A549 (cell line): ENCODE measurements at regions of chr10 and their contacts with region 1.

Region 1: GRCh38 chr10:43390759-43391158 is 18.2 kb downstream of the HNRNPF start:
- DNase-seq: peak in 1 of 2 experiments; percentile 73
- ATAC-seq: peak; percentile 82 to 87
- H3K4me3 ChIP-seq: no peak overlapping the region
- H3K27ac ChIP-seq: no peak overlapping the region
- H3K4me1 ChIP-seq: peaks cover 38% of the 10 kb centered on the region
- CTCF ChIP-seq: peak; percentile 46
- EP300 ChIP-seq: no peak
- POLR2A ChIP-seq: no peak
- RAD21 ChIP-seq: peak; percentile 56 to 64

Region 2: DNA sequence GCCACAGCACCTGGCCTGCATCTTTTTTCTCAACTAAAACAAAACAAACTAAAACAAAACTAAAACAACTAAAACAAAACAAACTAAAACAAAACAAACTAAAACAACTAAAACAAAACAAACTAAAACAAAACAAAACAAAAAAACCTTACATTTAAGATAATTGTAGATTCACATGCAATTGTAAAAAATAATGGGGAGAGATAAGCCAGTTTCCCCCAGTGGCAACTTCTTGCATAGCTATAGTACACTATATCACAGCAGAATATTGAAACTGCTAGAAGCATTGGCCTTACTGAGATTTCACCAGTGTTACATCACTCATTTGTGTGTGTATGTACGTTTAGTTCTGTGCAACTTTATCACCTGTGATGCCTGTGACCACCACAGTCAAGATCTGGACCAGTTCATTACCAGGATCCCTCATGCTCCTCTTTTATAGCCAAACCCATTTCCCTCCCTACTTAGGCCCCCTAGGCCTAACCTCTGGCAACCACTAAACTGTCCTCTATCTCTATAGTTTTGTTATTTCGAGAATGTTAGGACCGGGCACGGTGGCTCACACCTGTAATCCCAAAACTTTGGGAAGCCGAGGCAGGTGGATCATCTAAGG is 10.0 kb before region 1 on chr10:
- CTCF ChIA-PET with region 1: interaction called, 10 read pairs
- POLR2A ChIA-PET with region 1: interaction called, 4 read pairs
- DNase-seq: peak; percentile 60 to 63
- ATAC-seq: peak; percentile 58 to 67
- H3K4me3 ChIP-seq: no peak overlapping the region
- H3K27ac ChIP-seq: peak overlapping the region; percentile 79 to 80
- H3K4me1 ChIP-seq: peaks cover 28% of the 10 kb centered on the region
- CTCF ChIP-seq: no peak; the same call in 2 of the 3 replicates
- EP300 ChIP-seq: no peak
- POLR2A ChIP-seq: no peak
- RAD21 ChIP-seq: no peak

Region 3: GRCh38 chr10:43461950-43462349 is 71.2 kb after region 1 on chr10:
- CTCF ChIA-PET with region 1: interaction called, 12 read pairs
- POLR2A ChIA-PET with region 1: no interaction called
- DNase-seq: peak; percentile 55 to 86
- ATAC-seq: peak; percentile 89 to 91
- H3K4me3 ChIP-seq: no peak overlapping the region
- H3K27ac ChIP-seq: no peak overlapping the region
- H3K4me1 ChIP-seq: peaks cover 5% of the 10 kb centered on the region; the same call in 1 of the 3 replicates
- CTCF ChIP-seq: peak; percentile 89
- EP300 ChIP-seq: no peak
- POLR2A ChIP-seq: no peak
- RAD21 ChIP-seq: peak; percentile 80 to 81

Region 4: DNA sequence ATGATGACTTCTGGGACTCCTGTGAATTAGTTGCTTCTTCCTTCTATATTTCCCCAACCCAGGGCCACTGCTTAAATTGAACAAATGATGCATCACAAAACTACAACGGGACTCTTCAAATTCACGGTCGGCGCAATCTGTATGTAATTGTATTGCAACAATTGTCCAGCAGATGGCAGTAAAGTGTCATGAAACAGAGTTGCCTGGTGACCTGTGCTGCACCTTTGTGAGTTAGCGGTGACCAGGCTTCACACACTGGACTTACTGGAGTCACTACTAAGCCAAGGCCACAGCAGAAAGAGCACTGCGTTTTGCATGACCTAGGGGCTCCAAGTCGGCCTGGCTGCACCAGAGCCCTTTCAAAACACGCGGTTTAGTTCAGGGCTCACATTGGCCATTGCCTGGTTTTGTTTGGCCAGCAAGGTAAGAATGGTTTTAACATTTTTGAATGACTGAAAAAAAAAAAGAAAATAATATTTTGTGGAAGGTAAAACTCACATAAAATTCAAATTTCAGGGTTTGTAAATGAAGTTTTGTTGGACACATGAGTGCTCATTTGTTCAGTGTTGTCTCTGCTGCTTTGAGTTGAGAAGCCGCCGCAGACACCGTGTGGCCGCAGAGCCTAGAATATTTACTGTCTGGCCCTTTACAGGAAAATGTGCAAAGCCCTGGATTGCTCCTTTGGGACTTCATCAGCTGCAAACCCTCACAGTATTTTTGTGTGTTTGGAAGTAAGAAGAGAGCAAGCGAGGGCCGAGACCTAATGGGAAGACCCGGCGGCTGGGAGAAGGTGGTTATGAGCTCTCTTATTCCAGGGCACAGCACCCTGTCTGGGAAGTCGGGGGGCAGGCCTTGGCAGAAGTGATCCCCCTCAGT is 281.1 kb after region 1 on chr10:
- CTCF ChIA-PET with region 1: no interaction called
- POLR2A ChIA-PET with region 1: no interaction called
- DNase-seq: peak; percentile 70 to 80
- ATAC-seq: peak; percentile 65 to 85; a peak in 5 of 6 replicates
- H3K4me3 ChIP-seq: no peak overlapping the region
- H3K27ac ChIP-seq: no peak overlapping the region
- H3K4me1 ChIP-seq: no peaks in the 10 kb centered on the region
- CTCF ChIP-seq: peak; percentile 79
- EP300 ChIP-seq: no peak
- POLR2A ChIP-seq: no peak
- RAD21 ChIP-seq: peak; percentile 87 to 91